Mammary epithelial cell (primary cell): ENCODE measurements at regions of chr5 and their contacts with region 1.

Region 1: GRCh38 chr5:43040287-43041098 is at the start of gene ANXA2R:
- DNase-seq: no peak
- H3K4me3 ChIP-seq: peak within 1 kb of the TSS in 2 of 3 experiments; percentile 58 to 59
- H3K27ac ChIP-seq: peak within 1 kb of the TSS; percentile 77
- H3K4me1 ChIP-seq: peaks cover 5% of the 10 kb centered on the region
- H3K27me3 ChIP-seq: no peaks in the 10 kb centered on the region
- CTCF ChIP-seq: peak; percentile 11 to 27
- total RNA-seq, gene ANXA2R: 2.2 TPM

Region 2: DNA sequence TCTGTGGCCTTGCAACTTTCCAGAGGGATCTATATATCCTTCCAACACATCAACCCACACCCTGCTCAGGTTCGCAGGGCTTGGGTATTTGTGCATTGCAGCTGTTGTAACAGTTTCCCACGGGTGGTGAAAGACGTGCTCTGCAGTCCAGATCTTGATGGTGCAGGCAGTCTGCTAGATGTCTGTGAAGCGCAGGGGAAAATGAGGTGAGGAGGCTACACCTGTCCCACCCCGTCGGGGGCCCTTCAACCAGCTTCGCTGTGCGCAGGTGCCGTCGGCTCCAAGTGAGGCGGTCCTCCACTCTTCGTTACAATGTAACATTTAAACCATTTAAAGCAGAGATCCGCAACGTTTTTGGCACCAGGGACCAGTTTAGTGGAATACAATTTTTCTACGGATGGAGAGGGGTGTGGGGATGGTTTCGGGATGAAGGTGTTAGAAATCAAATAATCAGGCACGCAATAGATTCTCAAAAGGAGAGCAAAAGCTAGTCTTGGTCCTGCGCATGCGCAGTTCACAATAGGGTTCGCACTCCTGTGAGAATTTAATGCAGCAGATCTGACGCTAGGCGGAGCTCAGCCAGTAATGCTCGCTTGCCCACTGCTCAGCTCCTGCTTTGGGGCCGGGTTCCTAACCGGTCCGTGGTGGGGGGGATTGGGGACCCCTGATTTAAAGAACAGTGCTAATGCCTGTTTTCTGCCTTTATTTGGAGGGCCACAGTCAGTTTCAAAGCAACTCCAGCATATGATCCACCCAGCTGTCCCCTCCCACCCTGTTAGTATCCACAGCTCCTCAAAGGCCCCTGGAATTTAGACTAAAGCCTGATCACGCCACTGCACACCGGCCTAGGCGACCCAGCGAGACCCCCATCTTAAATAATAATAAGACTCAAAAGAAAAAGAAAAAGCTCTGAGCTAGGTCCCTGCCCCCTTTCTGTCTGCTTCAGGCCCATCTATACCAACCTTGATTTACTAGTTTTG is 131.7 kb before region 1 on chr5:
- CTCF ChIA-PET with region 1: interaction called, 3 read pairs
- dilution Hi-C with region 1: no loop called
- in situ Hi-C with region 1: loop called in 1 of 2 experiments (anchors 25 kb)
- intact Hi-C with region 1: loop called (anchors 1 kb)
- DNase-seq: peak; percentile 71
- H3K4me3 ChIP-seq: peak overlapping the region; percentile 45 to 52 (median 46)
- H3K27ac ChIP-seq: no peak overlapping the region
- H3K4me1 ChIP-seq: no peaks in the 10 kb centered on the region
- H3K27me3 ChIP-seq: no peaks in the 10 kb centered on the region
- CTCF ChIP-seq: peak; percentile 79 to 86

Region 3: DNA sequence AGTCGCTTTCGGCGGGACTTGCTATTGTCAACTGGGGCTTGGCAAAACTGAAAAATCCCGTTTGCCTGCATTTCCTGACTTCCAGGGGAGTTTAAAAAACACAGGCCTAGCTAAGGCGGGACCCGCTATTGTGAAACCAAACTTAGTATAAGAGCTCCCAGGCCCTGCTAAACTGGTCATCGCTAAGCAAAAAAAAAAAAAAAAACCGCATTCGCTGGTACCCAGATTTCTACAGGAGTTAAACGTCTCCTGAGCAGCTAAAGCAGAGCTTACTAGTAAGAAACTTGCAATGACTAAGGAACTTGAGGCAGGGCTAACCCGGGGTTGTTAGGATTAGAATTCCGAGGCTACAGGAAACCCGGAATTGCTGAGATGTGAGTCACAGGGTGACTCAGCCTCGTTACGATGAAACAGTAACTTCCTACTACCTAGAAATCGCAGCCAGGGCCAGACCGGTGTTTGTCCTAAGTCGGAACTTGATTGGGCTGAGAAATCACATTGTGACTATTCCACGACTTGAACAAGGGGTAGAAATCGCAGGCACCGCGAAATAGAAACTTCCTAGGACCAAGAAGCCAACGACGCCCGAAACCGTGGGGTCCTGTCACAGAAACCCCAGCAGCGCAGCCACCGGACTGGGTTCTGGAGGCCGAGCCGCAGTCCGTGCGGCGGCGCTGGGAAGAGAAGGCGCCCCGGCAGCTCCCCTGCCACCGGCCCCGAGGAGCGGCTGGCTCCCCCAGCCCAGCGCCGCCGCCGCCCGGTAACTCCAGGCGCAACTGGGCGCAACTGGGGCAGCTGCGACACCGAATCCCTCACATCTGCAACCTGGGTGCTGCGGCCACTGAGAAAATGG is 89.8 kb before region 1 on chr5:
- CTCF ChIA-PET with region 1: no interaction called
- dilution Hi-C with region 1: no loop called
- in situ Hi-C with region 1: no loop called
- intact Hi-C with region 1: loop called (anchors 2 kb)
- DNase-seq: peak; percentile 98
- H3K4me3 ChIP-seq: peak overlapping the region; percentile 27 to 38 (median 33)
- H3K27ac ChIP-seq: peak overlapping the region; percentile 78
- H3K4me1 ChIP-seq: peaks cover 13% of the 10 kb centered on the region
- H3K27me3 ChIP-seq: no peaks in the 10 kb centered on the region
- CTCF ChIP-seq: no peak

Region 4: GRCh38 chr5:42985129-42986037 is 55.1 kb before region 1 on chr5:
- CTCF ChIA-PET with region 1: no interaction called
- dilution Hi-C with region 1: no loop called
- in situ Hi-C with region 1: no loop called
- intact Hi-C with region 1: loop called (anchors 2 kb)
- DNase-seq: peak; percentile 80
- H3K4me3 ChIP-seq: no peak overlapping the region
- H3K27ac ChIP-seq: peak overlapping the region; percentile 86
- H3K4me1 ChIP-seq: peaks cover 32% of the 10 kb centered on the region
- H3K27me3 ChIP-seq: no peaks in the 10 kb centered on the region
- CTCF ChIP-seq: no peak

Region 5: DNA sequence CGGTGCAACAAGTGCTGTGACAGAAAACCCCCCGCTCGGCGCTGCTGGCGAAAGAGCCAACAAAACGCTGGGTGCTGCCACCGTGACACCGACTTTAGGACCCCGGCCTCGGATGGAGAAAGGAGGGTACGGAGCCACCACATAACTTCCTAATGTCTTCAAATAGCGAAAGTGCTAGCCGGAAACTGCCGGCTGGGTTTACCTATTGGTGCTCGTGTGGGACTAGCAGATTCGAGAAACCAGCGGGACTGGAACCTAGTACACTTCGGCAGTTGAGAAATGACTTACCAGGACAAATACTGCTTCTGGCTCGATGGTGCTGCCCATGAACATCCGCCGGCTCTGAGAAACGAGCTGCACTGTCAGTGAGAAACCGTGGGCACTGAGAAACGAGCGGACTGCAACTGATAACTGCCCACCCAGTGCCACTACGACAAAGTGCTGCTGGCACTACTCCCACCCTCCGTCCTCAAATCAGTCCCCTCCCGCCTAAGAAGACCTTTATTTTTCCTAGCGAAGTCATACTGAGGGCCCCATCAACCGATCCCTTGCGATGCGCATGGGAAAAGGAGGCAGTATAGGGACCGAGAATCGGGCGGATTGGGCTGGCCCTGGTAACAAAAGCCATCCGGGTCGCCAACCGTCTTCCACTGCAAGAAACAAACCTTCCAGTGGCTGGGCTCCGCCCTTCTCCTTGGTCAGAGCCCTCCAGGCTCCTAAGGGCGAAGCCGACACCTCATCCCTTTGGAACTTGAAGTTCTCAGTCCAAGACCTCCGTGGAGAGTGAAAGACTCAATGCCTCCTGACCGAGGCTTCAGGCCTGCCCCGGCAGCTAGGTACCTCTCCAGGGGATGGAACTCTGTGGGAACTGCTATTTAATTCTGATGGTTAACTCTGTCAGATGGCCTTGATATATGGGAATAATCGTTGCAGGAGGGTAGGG is 26.6 kb after region 1 on chr5:
- CTCF ChIA-PET with region 1: no interaction called
- dilution Hi-C with region 1: no loop called
- in situ Hi-C with region 1: no loop called
- intact Hi-C with region 1: loop called (anchors 1 kb)
- DNase-seq: peak; percentile 82
- H3K4me3 ChIP-seq: peak overlapping the region; percentile 56 to 81 (median 81)
- H3K27ac ChIP-seq: peak overlapping the region; percentile 98
- H3K4me1 ChIP-seq: peaks cover 24% of the 10 kb centered on the region
- H3K27me3 ChIP-seq: no peaks in the 10 kb centered on the region
- CTCF ChIP-seq: no peak

Region 6: GRCh38 chr5:43105369-43106289 is 65.1 kb after region 1 on chr5:
- CTCF ChIA-PET with region 1: no interaction called
- dilution Hi-C with region 1: no loop called
- in situ Hi-C with region 1: no loop called
- intact Hi-C with region 1: loop called (anchors 1 kb)
- DNase-seq: peak; percentile 88
- H3K4me3 ChIP-seq: peak overlapping the region; percentile 6 to 42 (median 35)
- H3K27ac ChIP-seq: no peak overlapping the region
- H3K4me1 ChIP-seq: peaks cover 4% of the 10 kb centered on the region
- H3K27me3 ChIP-seq: no peaks in the 10 kb centered on the region
- CTCF ChIP-seq: peak; percentile 100